Psoas muscle (tissue), 8 donors: ENCODE measurements at regions of chr7 and their contacts with region 1.

Region 1: GRCh38 chr7:100101016-100101862 is at the starts of genes AP4M1 and MCM7:
- DNase-seq: peak; percentile 99 to 100
- ATAC-seq: peak; percentile 94 to 95 (median 95)
- H3K4me3 ChIP-seq: peak within 1 kb of the TSS; percentile 77
- H3K27ac ChIP-seq: peak within 1 kb of the TSS; percentile 90
- H3K4me1 ChIP-seq: peaks cover 18% of the 10 kb centered on the region
- H3K27me3 ChIP-seq: no peaks in the 10 kb centered on the region
- CTCF ChIP-seq: no peak
- total RNA-seq, gene AP4M1: 8.8 to 12.9 (median 10.8) TPM
- total RNA-seq, gene MCM7: 24.6 to 34.0 (median 30.6) TPM

Region 2: GRCh38 chr7:100049441-100050311 is 51.6 kb before region 1 on chr7 and contains the start of gene ZSCAN21:
- intact Hi-C with region 1: loop called in 1 of 2 experiments (anchors 2 kb)
- DNase-seq: peak; percentile 90 to 94
- ATAC-seq: peak; percentile 95 to 98 (median 96)
- H3K4me3 ChIP-seq: peak within 1 kb of the TSS; percentile 94
- H3K27ac ChIP-seq: peak within 1 kb of the TSS; percentile 98
- H3K4me1 ChIP-seq: peaks cover 6% of the 10 kb centered on the region
- H3K27me3 ChIP-seq: no peaks in the 10 kb centered on the region
- CTCF ChIP-seq: no peak
- total RNA-seq, gene ZSCAN21: 9.9 to 20.3 (median 11.7) TPM

Region 3: GRCh38 chr7:100119062-100119700 is 17.9 kb after region 1 on chr7 and contains the starts of genes CNPY4 and TAF6:
- intact Hi-C with region 1: loop called in 1 of 2 experiments (anchors 1 kb)
- DNase-seq: peak; percentile 95 to 99
- ATAC-seq: peak; percentile 93 to 98 (median 95)
- H3K4me3 ChIP-seq: peak within 1 kb of the TSS; percentile 84
- H3K27ac ChIP-seq: peak within 1 kb of the TSS; percentile 91
- H3K4me1 ChIP-seq: peaks cover 16% of the 10 kb centered on the region
- H3K27me3 ChIP-seq: no peaks in the 10 kb centered on the region
- CTCF ChIP-seq: peak; percentile 10
- total RNA-seq, gene CNPY4: 2.2 to 3.9 (median 2.5) TPM
- total RNA-seq, gene TAF6: 26.8 to 40.5 (median 31.7) TPM

Region 4: DNA sequence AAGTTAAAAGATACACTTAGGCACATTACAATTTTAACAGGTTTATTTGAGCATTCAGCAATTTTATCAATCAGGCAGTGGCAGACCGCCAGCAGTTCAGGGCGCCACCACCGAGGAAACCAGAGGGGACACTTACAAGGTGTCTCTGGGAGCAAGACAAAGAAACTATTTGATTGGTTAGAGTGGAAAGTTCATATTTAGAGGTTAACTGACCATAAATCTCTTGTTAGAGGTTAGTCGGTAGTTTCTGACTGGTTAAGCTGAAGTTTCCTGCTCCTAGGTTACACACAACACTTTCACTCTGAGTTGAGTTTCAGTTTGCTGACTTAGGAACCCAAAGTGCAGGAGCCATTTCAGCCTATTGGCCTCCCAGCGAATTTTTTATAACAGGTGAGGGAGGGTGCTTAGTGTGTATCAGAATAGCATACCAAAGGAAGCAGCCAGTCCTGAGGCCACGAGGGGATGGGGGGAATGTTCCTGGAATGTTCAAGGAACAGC is 107.7 kb after region 1 on chr7:
- intact Hi-C with region 1: no loop called
- DNase-seq: no peak
- ATAC-seq: no peak
- H3K4me3 ChIP-seq: no peak overlapping the region
- H3K27ac ChIP-seq: no peak overlapping the region
- H3K4me1 ChIP-seq: no peaks in the 10 kb centered on the region
- H3K27me3 ChIP-seq: no peaks in the 10 kb centered on the region
- CTCF ChIP-seq: no peak